ENCODE measurements at regions of chr19 and their contacts with region 1.

Region 1: GRCh38 chr19:33143897-33144405 is 12.0 kb downstream of the WDR88 start:
- DNase-seq: peak; percentile 17 to 80 (median 60)
- ATAC-seq: peak; percentile 99
- H3K4me3 ChIP-seq: no peak overlapping the region
- H3K4me3 Mint-ChIP-seq: no peak overlapping the region
- H3K27ac ChIP-seq: no peak overlapping the region
- H3K27ac Mint-ChIP-seq: no peak overlapping the region
- H3K4me1 ChIP-seq: peaks cover 3% of the 10 kb centered on the region
- H3K4me1 Mint-ChIP-seq: peaks cover 4% of the 10 kb centered on the region
- H3K27me3 ChIP-seq: peaks cover 0 to 3% of the 10 kb centered on the region in 2 experiments
- H3K27me3 Mint-ChIP-seq: peaks cover 2% of the 10 kb centered on the region
- CTCF ChIP-seq: peak; percentile 91

Region 2: GRCh38 chr19:32421589-32422361 is 722.2 kb before region 1 on chr19:
- CTCF ChIA-PET with region 1: no interaction called
- POLR2A ChIA-PET with region 1: no interaction called
- intact Hi-C with region 1: no loop called
- DNase-seq: peak in 1 of 9 experiments; percentile 9
- ATAC-seq: no peak
- H3K4me3 ChIP-seq: no peak overlapping the region
- H3K4me3 Mint-ChIP-seq: peak overlapping the region; percentile 6
- H3K27ac ChIP-seq: peak overlapping the region; percentile 2 to 7
- H3K27ac Mint-ChIP-seq: peak overlapping the region; percentile 78
- H3K4me1 ChIP-seq: peaks cover 16% of the 10 kb centered on the region
- H3K4me1 Mint-ChIP-seq: peaks cover 14% of the 10 kb centered on the region
- H3K27me3 ChIP-seq: no peaks in the 10 kb centered on the region
- H3K27me3 Mint-ChIP-seq: no peaks in the 10 kb centered on the region
- CTCF ChIP-seq: no peak

Region 3: DNA sequence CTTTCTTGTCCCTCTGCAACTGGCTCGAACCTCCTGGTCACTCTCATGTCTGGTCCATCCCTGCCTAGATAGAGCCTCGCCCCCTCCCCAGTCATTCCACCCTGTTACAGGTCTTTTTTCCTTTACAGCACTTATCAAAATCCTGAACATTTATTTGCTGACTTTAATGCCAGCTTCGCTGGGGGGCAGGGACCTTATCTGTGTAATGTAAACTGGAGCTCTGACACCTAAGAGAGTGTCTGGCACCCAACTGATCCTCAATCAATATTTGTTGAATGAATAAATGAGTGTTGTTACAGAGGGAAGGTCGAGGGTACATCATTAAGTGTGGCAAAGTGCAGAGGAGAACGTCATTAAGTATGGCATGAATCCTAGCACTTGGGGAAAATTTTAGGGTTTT is 155.2 kb before region 1 on chr19:
- CTCF ChIA-PET with region 1: no interaction called
- POLR2A ChIA-PET with region 1: no interaction called
- intact Hi-C with region 1: no loop called
- DNase-seq: no peak
- ATAC-seq: no peak
- H3K4me3 ChIP-seq: no peak overlapping the region
- H3K4me3 Mint-ChIP-seq: no peak overlapping the region
- H3K27ac ChIP-seq: no peak overlapping the region
- H3K27ac Mint-ChIP-seq: no peak overlapping the region
- H3K4me1 ChIP-seq: no peaks in the 10 kb centered on the region
- H3K4me1 Mint-ChIP-seq: peaks cover 5% of the 10 kb centered on the region
- H3K27me3 ChIP-seq: no peaks in the 10 kb centered on the region
- H3K27me3 Mint-ChIP-seq: no peaks in the 10 kb centered on the region
- CTCF ChIP-seq: no peak

Region 4: GRCh38 chr19:33125929-33126388 is 18.0 kb before region 1 on chr19:
- CTCF ChIA-PET with region 1: interaction called, 11 read pairs
- POLR2A ChIA-PET with region 1: no interaction called
- intact Hi-C with region 1: no loop called
- DNase-seq: peak; percentile 9 to 79 (median 57)
- ATAC-seq: peak; percentile 97
- H3K4me3 ChIP-seq: no peak overlapping the region
- H3K4me3 Mint-ChIP-seq: no peak overlapping the region
- H3K27ac ChIP-seq: no peak overlapping the region
- H3K27ac Mint-ChIP-seq: no peak overlapping the region
- H3K4me1 ChIP-seq: no peaks in the 10 kb centered on the region
- H3K4me1 Mint-ChIP-seq: peaks cover 6% of the 10 kb centered on the region
- H3K27me3 ChIP-seq: no peaks in the 10 kb centered on the region
- H3K27me3 Mint-ChIP-seq: no peaks in the 10 kb centered on the region
- CTCF ChIP-seq: peak; percentile 71

Region 5: DNA sequence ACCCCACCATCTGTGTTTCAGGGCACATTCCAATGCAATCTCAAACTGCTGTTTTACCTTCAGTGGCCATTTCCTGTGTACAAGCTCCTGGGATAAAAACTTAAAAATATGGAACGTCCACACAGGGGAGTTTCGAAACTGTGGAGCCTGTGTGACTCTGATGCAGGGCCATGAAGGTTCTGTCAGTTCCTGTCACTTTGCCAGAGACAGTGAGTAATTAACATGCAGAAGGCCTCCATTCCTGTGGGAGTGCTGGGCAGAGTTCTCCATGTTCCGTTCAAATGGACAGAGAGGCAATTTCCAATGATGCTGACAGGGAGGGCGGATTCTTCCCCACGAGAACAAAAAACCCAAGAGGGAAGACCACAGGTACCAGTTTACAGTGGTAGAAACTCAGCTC is 12.4 kb after region 1 on chr19:
- CTCF ChIA-PET with region 1: interaction called, 14 read pairs
- POLR2A ChIA-PET with region 1: no interaction called
- intact Hi-C with region 1: no loop called
- DNase-seq: no peak
- ATAC-seq: no peak
- H3K4me3 ChIP-seq: no peak overlapping the region
- H3K4me3 Mint-ChIP-seq: no peak overlapping the region
- H3K27ac ChIP-seq: no peak overlapping the region
- H3K27ac Mint-ChIP-seq: no peak overlapping the region
- H3K4me1 ChIP-seq: peaks cover 32% of the 10 kb centered on the region
- H3K4me1 Mint-ChIP-seq: peaks cover 31% of the 10 kb centered on the region
- H3K27me3 ChIP-seq: no peaks in the 10 kb centered on the region
- H3K27me3 Mint-ChIP-seq: no peaks in the 10 kb centered on the region
- CTCF ChIP-seq: no peak

Region 6: GRCh38 chr19:33171222-33171795 is 27.4 kb after region 1 on chr19:
- CTCF ChIA-PET with region 1: interaction called, 16 read pairs
- POLR2A ChIA-PET with region 1: interaction called, 5 read pairs
- intact Hi-C with region 1: loop called in 1 of 2 experiments (anchors 2 kb)
- DNase-seq: no peak
- ATAC-seq: no peak
- H3K4me3 ChIP-seq: no peak overlapping the region
- H3K4me3 Mint-ChIP-seq: no peak overlapping the region
- H3K27ac ChIP-seq: no peak overlapping the region
- H3K27ac Mint-ChIP-seq: no peak overlapping the region
- H3K4me1 ChIP-seq: peaks cover 9% of the 10 kb centered on the region
- H3K4me1 Mint-ChIP-seq: peaks cover 38% of the 10 kb centered on the region
- H3K27me3 ChIP-seq: no peaks in the 10 kb centered on the region
- H3K27me3 Mint-ChIP-seq: no peaks in the 10 kb centered on the region
- CTCF ChIP-seq: no peak

Region 7: DNA sequence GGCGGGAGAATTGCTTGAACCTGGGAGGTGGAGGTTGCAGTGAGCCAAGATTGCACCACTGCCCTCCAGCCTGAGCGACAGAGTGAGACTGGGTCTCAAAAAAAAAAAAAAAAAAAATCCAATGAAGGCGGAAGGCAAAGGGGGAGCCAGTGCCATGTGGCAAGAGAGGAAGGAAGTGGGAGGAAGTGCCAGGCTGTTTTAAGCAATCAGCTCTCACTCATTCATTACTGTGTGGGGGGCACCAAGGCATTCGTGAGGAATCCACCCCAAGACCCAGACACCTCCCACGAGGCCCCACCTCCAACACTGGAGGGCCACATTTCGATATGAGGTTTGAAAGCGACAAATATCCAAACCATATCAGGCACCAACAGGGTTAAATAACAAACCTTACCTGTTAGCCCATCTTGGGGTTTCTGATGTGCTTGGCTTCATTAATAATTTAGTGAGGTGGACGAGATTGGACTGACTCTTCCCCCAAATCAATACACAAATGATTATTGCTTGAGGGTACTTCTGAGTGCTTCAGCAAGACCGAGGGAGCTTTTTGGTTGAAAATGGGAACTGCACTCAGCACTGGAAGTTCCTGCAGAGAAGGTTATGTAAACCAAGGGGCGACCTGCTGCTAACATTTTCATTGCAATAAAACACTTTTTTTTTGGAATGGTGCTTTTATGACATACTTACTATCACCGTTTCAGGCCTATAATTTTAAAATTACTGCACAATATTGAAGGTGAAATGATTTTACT is 42.7 kb after region 1 on chr19:
- CTCF ChIA-PET with region 1: interaction called, 55 read pairs
- POLR2A ChIA-PET with region 1: no interaction called
- intact Hi-C with region 1: loop called (anchors 1 kb)
- DNase-seq: peak in 1 of 9 experiments; percentile 29
- ATAC-seq: no peak
- H3K4me3 ChIP-seq: no peak overlapping the region
- H3K4me3 Mint-ChIP-seq: no peak overlapping the region
- H3K27ac ChIP-seq: no peak overlapping the region
- H3K27ac Mint-ChIP-seq: no peak overlapping the region
- H3K4me1 ChIP-seq: peaks cover 10% of the 10 kb centered on the region
- H3K4me1 Mint-ChIP-seq: peaks cover 9% of the 10 kb centered on the region
- H3K27me3 ChIP-seq: no peaks in the 10 kb centered on the region
- H3K27me3 Mint-ChIP-seq: peaks cover 8% of the 10 kb centered on the region
- CTCF ChIP-seq: no peak

Region 8: GRCh38 chr19:33406521-33407139 is 262.7 kb after region 1 on chr19:
- CTCF ChIA-PET with region 1: interaction called, 12 read pairs
- POLR2A ChIA-PET with region 1: no interaction called
- intact Hi-C with region 1: loop called (anchors 1 to 2 kb)
- DNase-seq: peak; percentile 54 to 86 (median 74)
- ATAC-seq: peak; percentile 80
- H3K4me3 ChIP-seq: no peak overlapping the region
- H3K4me3 Mint-ChIP-seq: no peak overlapping the region
- H3K27ac ChIP-seq: no peak overlapping the region
- H3K27ac Mint-ChIP-seq: no peak overlapping the region
- H3K4me1 ChIP-seq: no peaks in the 10 kb centered on the region
- H3K4me1 Mint-ChIP-seq: no peaks in the 10 kb centered on the region
- H3K27me3 ChIP-seq: no peaks in the 10 kb centered on the region
- H3K27me3 Mint-ChIP-seq: no peaks in the 10 kb centered on the region
- CTCF ChIP-seq: peak; percentile 86

Measured in CD8-positive, alpha-beta T cell (primary cell).